Posterior vena cava (tissue), 2 donors: ENCODE measurements at regions of chr5 and their contacts with region 1.

Region 1: DNA sequence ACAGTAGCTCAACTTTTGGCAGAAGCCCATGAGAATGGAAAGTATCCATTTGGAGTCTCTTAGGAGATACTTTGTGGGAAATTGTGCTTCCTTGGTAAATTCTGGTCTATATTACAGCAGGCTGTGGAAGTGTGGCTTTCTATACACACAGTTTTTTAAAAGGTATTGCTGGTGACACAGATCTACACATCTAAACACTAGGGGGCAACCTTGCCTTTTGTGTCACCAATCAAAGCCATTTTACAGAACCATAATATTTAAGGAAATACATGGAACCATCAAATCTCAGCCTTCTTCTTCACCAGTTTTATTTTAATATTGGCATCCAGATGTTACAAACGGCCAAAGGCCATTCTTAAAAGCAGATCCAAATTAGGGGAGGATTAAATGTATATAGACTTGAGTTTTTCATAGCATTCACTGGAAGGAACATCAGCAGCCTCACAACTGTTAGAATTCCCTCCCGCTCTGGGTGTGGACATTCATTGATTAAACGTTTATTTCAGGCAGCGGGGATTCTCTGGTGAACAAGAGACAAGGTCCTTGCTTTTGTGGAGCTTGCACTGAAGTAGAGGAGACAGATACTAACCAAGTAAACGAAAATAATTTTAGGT is 132.4 kb upstream of the EPB41L4A start:
- DNase-seq: no peak

Region 2: DNA sequence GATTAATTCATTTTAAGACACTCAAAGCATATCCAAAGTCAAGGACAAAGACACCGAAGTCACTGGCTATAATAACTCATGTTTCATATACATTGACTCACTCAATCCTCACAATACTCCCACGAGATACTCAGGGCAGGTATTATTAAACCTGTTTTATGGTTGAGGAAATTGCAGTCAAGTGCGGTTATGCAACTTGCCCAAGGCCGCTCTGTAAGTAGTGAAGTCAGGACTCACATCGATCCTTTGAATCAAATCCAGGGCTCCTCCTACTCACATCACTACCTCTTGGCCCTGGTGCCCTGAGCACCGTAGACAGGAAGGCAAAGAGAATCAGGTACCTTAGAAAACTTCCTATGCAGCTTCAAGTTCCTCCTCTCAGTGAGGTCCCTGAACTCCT is 98.4 kb after region 1 on chr5:
- intact Hi-C with region 1: no loop called
- DNase-seq: no peak

Region 3: DNA sequence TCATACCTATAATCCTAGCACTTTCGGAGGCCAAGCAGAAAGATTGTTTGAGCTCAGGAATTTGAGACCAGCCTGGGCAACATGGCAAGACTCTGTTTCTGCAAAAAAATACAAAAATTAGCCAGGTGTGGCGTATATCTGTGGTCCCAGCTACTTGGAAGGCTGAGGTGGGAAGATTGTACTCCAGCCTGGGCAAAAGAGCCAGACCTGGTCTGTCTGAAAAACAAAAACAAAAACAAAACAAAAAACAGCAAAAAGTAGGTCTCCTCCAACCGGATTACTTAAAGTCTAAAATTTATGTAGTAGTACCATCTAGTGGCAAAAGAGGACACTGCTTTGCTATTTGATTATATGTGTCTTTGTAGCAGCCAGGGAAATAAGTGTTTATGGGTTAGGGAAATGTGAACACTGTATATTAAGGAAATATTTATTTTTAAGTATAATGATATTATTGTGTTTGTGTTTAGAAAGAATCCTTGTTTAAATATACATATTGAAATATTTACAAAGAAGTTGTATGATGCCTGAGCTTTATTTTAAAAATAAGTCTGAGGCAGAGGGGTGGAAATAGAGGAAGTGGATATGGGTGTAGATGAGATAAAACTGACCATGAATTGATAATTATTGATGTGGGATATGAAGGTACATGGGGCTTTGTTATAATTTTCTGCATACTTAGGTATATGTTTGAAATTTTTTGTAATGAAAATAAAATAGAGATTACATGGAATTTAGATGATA is 206.1 kb after region 1 on chr5:
- intact Hi-C with region 1: loop called (anchors 5 kb)
- DNase-seq: no peak